HCT116 (cell line): ENCODE measurements at regions of chr22 and their contacts with region 1.

Region 1: DNA sequence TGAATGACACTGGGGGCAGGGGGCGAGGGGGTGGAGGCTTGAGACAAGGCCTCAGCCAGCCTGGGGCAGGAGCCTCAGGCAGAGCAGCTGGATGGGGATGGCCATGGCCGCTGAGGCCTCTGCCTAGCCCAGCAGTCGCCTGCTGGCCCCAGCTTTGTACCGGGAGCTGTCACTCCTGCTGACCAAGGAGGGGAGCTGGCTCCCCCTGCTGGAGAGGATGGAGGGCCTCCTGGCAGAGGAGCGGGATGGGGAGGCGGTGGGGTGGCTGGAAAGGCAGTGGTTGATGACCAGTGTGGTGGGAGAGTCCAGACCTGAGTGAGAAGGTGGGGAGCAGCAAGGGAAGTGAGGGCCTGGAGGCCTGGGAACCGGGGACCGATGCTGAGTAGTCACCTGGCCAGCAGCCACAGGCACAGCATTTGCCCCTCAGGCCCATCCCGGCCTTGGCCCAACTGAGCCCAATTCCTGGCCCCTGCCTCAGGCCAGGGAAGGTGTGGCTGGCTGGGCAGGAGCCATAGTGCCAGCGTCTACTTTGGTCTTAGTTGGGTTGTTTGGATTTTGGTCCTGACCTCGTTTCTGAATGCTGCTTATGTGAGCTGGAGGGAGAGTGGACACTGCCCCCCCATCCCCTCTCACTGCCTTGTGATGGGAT is 6.0 kb upstream of the SUSD2 start:
- DNase-seq: peak; percentile 31
- ATAC-seq: peak; percentile 89
- H3K4me3 ChIP-seq: no peak overlapping the region
- H3K27ac ChIP-seq: no peak overlapping the region
- H3K4me1 ChIP-seq: no peaks in the 10 kb centered on the region
- H3K27me3 ChIP-seq: no peaks in the 10 kb centered on the region
- CTCF ChIP-seq: peak; percentile 68 to 94 (median 85)
- POLR2A ChIP-seq: no peak
- RAD21 ChIP-seq: peak; percentile 82

Region 2: GRCh38 chr22:23984430-23984829 is 190.9 kb before region 1 on chr22:
- CTCF ChIA-PET with region 1: interaction called, 17 read pairs
- POLR2A ChIA-PET with region 1: no interaction called
- RAD21 ChIA-PET with region 1: no interaction called
- intact Hi-C with region 1: loop called (anchors 5 kb)
- DNase-seq: peak; percentile 48
- ATAC-seq: peak; percentile 66
- H3K4me3 ChIP-seq: no peak overlapping the region
- H3K27ac ChIP-seq: no peak overlapping the region
- H3K4me1 ChIP-seq: no peaks in the 10 kb centered on the region
- H3K27me3 ChIP-seq: no peaks in the 10 kb centered on the region
- CTCF ChIP-seq: peak; percentile 75 to 81 (median 76)
- POLR2A ChIP-seq: no peak
- RAD21 ChIP-seq: peak; percentile 89

Region 3: GRCh38 chr22:24037851-24038765 is 137.2 kb before region 1 on chr22:
- CTCF ChIA-PET with region 1: no interaction called
- POLR2A ChIA-PET with region 1: no interaction called
- RAD21 ChIA-PET with region 1: no interaction called
- intact Hi-C with region 1: no loop called
- DNase-seq: no peak
- ATAC-seq: no peak
- H3K4me3 ChIP-seq: no peak overlapping the region
- H3K27ac ChIP-seq: no peak overlapping the region
- H3K4me1 ChIP-seq: peaks cover 0 to 6% of the 10 kb centered on the region in 2 experiments; a peak in 1 of 4 replicates
- H3K27me3 ChIP-seq: no peaks in the 10 kb centered on the region
- CTCF ChIP-seq: no peak
- POLR2A ChIP-seq: no peak
- RAD21 ChIP-seq: no peak

Region 4: DNA sequence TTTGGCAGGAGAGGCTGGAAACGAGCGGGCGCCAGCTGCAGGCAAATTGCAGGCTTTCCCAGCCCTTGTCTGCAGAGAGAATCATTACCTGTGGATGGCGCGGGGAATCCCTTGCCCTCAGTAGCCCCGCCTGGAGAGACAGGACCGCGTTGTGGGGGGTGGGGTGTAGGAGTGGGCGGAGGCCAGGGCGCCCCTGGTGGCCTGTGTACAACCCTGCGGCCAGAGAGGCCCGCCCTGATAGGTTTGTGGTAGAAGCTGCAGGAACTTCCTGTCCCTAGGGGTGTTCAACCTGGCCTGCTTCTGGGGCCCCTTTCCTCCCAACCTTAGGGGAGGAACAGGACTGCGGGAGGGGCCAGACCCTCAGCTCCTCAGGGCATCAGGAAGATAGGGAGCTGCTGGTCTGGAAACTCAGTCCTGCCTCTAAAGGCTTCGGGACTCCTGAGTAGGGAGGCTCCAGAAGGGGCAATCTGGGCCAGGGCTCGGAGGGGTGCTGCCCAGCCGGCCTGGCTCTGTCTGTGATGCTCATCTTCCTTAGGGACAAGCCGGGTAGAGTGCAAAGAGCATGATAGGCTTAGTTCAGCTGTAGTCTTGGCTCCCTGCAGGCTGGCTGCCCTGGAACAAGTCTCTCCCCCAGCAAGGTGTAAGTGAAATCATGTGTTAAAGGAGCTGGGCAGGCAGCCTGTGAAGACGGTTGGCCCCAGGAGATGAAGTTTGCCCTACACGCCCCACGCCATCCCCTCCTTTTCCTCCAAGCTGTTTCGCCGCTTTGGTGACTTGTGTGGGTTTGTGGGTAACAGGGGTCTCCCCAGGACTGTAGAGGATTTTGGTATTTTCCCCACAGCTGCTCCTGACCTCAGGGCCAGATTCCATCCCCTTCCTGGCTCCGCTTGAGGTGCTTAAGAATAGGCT is 18.1 kb before region 1 on chr22:
- CTCF ChIA-PET with region 1: interaction called, 29 read pairs
- POLR2A ChIA-PET with region 1: no interaction called
- RAD21 ChIA-PET with region 1: no interaction called
- intact Hi-C with region 1: no loop called
- DNase-seq: peak; percentile 67
- ATAC-seq: peak; percentile 89
- H3K4me3 ChIP-seq: peak overlapping the region; percentile 55 to 69
- H3K27ac ChIP-seq: peak overlapping the region; percentile 86
- H3K4me1 ChIP-seq: peaks cover 18 to 31% of the 10 kb centered on the region in 2 experiments
- H3K27me3 ChIP-seq: no peaks in the 10 kb centered on the region
- CTCF ChIP-seq: peak; percentile 57 to 93 (median 91); a peak in 5 of 6 replicates
- POLR2A ChIP-seq: no peak
- RAD21 ChIP-seq: no peak

Region 5: GRCh38 chr22:24214467-24215285 is 39.4 kb after region 1 on chr22:
- CTCF ChIA-PET with region 1: no interaction called
- POLR2A ChIA-PET with region 1: no interaction called
- RAD21 ChIA-PET with region 1: no interaction called
- intact Hi-C with region 1: no loop called
- DNase-seq: no peak
- ATAC-seq: peak; percentile 81
- H3K4me3 ChIP-seq: no peak overlapping the region
- H3K27ac ChIP-seq: peak overlapping the region; percentile 51; the same call in 1 of the 2 replicates
- H3K4me1 ChIP-seq: peaks cover 23 to 32% of the 10 kb centered on the region in 2 experiments
- H3K27me3 ChIP-seq: no peaks in the 10 kb centered on the region
- CTCF ChIP-seq: peak in 1 of 3 experiments; percentile 11; a peak in 1 of 6 replicates
- POLR2A ChIP-seq: no peak
- RAD21 ChIP-seq: no peak